ENCODE measurements at regions of chr7 and their contacts with region 1.

Region 1: GRCh38 chr7:55255496-55256435 is 109.4 kb upstream of the LANCL2 start:
- DNase-seq: peak; percentile 81
- H3K4me3 Mint-ChIP-seq: peak overlapping the region; percentile 78
- H3K27ac Mint-ChIP-seq: peak overlapping the region; percentile 72
- H3K4me1 Mint-ChIP-seq: no peaks in the 10 kb centered on the region
- H3K27me3 Mint-ChIP-seq: peaks cover 12% of the 10 kb centered on the region
- CTCF ChIP-seq: peak; percentile 68

Region 2: DNA sequence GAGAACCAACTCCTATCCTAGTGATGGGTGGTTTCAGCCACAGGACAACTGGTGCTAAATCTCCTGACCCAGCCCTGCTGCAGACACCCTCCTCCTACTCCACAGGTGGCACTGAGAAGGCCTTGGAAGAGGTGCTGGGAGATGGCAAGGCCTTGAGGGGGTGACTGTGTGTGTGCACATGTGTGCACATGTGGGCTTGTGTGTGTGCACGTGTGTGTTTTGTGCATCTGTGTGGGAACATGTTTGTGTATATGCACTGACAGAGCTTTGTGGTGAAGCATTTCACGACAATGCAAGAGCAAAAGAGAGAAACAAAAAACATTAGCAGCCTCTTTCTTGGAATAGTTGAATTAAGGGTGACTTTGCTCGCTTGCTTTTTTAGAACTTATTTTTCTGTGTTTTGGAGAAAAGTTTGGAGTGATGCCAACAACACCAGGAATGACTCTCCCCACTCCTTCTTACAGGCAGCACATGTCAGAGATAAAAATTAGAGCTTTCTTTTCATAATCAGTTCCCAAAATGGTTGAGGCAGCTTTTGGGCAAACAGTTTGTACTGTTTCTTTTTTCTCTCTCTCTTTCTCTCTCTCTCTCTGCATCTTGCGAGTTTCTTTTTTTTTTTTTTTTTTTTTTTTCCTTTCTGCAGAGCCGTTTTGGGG is 566.2 kb before region 1 on chr7:
- CTCF ChIA-PET with region 1: no interaction called
- POLR2A ChIA-PET with region 1: no interaction called
- intact Hi-C with region 1: loop called (anchors 10 kb)
- DNase-seq: no peak
- H3K4me3 Mint-ChIP-seq: no peak overlapping the region
- H3K27ac Mint-ChIP-seq: no peak overlapping the region
- H3K4me1 Mint-ChIP-seq: peaks cover 7% of the 10 kb centered on the region
- H3K27me3 Mint-ChIP-seq: peaks cover 70% of the 10 kb centered on the region
- CTCF ChIP-seq: no peak

Region 3: GRCh38 chr7:54839538-54840213 is 416.1 kb before region 1 on chr7:
- CTCF ChIA-PET with region 1: interaction called, 21 read pairs
- POLR2A ChIA-PET with region 1: no interaction called
- intact Hi-C with region 1: loop called (anchors 1 kb)
- DNase-seq: peak; percentile 81
- H3K4me3 Mint-ChIP-seq: no peak overlapping the region
- H3K27ac Mint-ChIP-seq: no peak overlapping the region
- H3K4me1 Mint-ChIP-seq: peaks cover 29% of the 10 kb centered on the region
- H3K27me3 Mint-ChIP-seq: no peaks in the 10 kb centered on the region
- CTCF ChIP-seq: peak; percentile 80

Region 4: DNA sequence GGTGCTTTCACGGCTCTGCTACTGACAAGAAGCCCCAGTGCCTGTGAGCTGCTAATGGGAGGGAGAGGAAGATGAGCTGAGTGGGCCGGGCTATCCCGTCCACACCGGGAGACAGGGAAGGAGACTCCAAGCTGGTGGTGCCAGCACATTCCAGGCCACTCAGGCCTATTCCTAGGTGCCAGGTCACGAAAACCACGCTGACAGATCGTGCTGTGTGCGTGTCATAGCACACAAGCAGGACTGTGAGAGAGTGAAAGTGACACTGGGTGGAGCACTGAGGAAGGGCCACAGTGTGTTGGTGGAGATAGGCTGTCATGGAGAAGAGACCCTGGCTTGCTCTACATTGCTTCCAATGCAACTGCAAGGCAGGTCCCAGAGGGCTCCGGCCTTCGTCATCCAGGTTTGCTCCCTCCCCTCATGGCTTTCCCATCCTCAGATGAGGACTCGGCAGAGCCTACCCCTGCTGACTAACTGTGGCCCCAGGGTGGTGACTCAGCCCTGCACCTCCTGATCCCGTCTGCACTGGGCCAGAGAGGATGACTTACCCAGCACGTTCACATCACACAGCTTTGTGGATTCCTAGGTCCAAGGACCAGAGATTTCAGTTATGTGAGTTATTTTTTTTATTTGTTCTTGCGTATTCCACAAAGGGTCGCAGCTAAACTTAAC is 69.7 kb before region 1 on chr7:
- CTCF ChIA-PET with region 1: interaction called, 17 read pairs
- POLR2A ChIA-PET with region 1: interaction called, 4 read pairs
- intact Hi-C with region 1: loop called (anchors 1 kb)
- DNase-seq: peak; percentile 97
- H3K4me3 Mint-ChIP-seq: no peak overlapping the region
- H3K27ac Mint-ChIP-seq: peak overlapping the region; percentile 79
- H3K4me1 Mint-ChIP-seq: peaks cover 29% of the 10 kb centered on the region
- H3K27me3 Mint-ChIP-seq: no peaks in the 10 kb centered on the region
- CTCF ChIP-seq: no peak

Region 5: DNA sequence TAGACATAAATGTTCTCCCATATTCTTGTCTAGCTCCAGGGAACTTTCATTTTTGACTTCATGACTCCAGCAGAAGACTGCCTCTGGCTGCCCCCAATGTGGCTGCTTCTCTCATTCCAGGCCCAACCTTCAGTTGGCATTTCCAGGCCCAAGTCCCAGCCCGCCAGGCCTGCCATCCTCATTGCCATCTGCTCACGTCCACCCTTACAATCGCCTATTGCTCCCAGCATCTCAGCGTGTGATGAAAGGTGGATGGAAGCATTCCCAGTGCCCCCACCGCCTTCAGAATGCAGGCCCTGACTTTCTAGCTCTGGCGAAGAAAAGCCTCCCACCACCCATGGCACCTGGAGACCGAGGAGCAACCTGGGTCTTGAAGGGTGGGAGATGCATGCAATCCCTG is 22.8 kb before region 1 on chr7:
- CTCF ChIA-PET with region 1: interaction called, 18 read pairs
- POLR2A ChIA-PET with region 1: interaction called, 3 read pairs
- intact Hi-C with region 1: no loop called
- DNase-seq: no peak
- H3K4me3 Mint-ChIP-seq: no peak overlapping the region
- H3K27ac Mint-ChIP-seq: no peak overlapping the region
- H3K4me1 Mint-ChIP-seq: no peaks in the 10 kb centered on the region
- H3K27me3 Mint-ChIP-seq: peaks cover 67% of the 10 kb centered on the region
- CTCF ChIP-seq: no peak

Region 6: DNA sequence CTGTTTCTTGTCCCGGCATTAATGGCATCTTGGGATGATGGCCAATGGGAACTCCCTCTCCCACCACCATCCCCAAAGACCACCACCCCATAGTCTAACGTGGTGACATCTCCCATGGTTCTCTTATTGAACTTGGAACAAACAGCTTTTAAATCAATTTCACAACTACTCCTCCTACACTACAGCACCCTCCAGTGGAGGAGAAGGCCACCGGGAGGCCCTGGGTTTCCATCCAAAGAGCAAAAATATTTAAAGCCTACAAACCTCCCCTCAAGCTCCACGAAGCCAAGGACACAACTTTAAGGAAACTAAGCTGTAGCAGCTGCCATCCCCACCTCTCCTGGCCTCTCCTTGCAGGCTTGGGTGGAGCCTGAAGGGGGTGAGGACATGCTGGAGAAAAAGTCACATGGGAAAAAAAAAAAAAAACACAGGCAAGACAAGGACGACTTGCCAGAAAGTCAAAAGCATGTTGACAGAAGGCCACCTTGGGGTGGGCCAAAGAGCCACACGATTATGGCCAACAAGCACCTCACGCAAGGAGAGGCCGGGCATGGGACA is 15.4 kb after region 1 on chr7:
- CTCF ChIA-PET with region 1: interaction called, 31 read pairs
- POLR2A ChIA-PET with region 1: no interaction called
- intact Hi-C with region 1: no loop called
- DNase-seq: peak; percentile 24
- H3K4me3 Mint-ChIP-seq: no peak overlapping the region
- H3K27ac Mint-ChIP-seq: no peak overlapping the region
- H3K4me1 Mint-ChIP-seq: no peaks in the 10 kb centered on the region
- H3K27me3 Mint-ChIP-seq: peaks cover 21% of the 10 kb centered on the region
- CTCF ChIP-seq: peak; percentile 18

Region 7: DNA sequence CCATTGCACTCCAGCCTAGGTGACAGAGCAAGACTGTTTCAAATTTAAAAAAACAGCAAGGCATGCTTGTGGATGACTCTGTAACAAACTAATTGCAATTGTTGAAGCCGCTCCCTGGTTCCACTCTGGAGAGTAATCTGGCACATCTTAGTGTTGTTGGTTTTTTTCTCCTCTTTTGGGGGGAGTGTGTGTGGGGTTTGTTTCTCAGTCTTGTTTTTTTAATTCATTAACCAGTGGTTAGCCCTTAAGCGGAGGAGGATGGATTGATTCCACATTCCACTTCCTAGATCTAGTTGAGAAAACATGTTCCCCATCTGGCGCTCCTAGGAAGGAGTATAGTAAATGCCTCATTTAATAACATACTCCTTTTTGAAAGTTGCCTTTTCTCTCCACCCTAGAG is 622.9 kb after region 1 on chr7:
- CTCF ChIA-PET with region 1: no interaction called
- POLR2A ChIA-PET with region 1: no interaction called
- intact Hi-C with region 1: no loop called
- DNase-seq: no peak
- H3K4me3 Mint-ChIP-seq: no peak overlapping the region
- H3K27ac Mint-ChIP-seq: no peak overlapping the region
- H3K4me1 Mint-ChIP-seq: no peaks in the 10 kb centered on the region
- H3K27me3 Mint-ChIP-seq: no peaks in the 10 kb centered on the region
- CTCF ChIP-seq: no peak